Breast epithelium (tissue), 4 donors: ENCODE measurements at regions of chr10 and their contacts with region 1.

Region 1: DNA sequence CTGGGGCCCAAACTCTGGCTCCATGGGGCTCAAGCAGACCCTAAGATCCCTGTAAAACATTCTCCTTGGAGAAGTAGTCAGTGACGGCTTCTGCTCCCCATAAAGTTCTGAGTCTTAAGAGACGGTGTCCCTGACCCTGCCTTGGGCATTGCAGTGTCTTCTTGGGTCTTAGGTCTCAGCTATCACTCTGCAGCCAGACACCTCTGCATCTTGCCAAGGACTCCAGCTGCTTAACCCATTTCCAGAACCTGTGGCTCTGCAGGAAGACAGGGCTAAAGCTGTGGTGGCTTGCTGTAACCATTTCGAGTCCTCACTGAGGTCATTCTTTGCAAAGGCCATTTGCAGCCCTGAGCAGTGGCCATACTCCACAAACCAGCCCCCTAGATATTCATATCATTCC is 337.1 kb upstream of the ZMIZ1 start:
- DNase-seq: no peak
- H3K4me3 ChIP-seq: no peak overlapping the region
- H3K27ac ChIP-seq: no peak overlapping the region
- H3K4me1 ChIP-seq: no peaks in the 10 kb centered on the region
- H3K27me3 ChIP-seq: no peaks in the 10 kb centered on the region
- CTCF ChIP-seq: no peak
- POLR2A ChIP-seq: no peak

Region 2: DNA sequence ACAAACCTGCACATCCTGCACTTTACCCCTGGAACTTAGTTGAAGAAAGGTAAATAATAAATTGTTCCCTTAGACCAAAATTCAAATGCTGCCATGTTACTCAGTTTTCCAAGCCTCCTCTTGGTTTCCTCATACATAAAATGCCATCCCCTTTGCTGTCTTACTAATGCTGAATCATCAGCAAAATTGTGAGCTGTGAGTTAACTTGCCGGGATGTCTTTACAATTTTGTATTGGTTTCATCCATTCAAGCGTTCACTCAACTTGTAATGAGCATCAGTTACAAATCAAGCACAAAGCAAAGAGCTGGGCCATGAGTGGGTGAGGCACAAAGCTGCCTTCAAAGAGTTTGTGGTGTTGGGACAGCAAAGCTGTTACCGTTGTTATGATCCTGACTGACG is 58.8 kb before region 1 on chr10:
- intact Hi-C with region 1: no loop called
- DNase-seq: no peak
- H3K4me3 ChIP-seq: no peak overlapping the region
- H3K27ac ChIP-seq: no peak overlapping the region
- H3K4me1 ChIP-seq: no peaks in the 10 kb centered on the region
- H3K27me3 ChIP-seq: no peaks in the 10 kb centered on the region
- CTCF ChIP-seq: no peak
- POLR2A ChIP-seq: no peak

Region 3: DNA sequence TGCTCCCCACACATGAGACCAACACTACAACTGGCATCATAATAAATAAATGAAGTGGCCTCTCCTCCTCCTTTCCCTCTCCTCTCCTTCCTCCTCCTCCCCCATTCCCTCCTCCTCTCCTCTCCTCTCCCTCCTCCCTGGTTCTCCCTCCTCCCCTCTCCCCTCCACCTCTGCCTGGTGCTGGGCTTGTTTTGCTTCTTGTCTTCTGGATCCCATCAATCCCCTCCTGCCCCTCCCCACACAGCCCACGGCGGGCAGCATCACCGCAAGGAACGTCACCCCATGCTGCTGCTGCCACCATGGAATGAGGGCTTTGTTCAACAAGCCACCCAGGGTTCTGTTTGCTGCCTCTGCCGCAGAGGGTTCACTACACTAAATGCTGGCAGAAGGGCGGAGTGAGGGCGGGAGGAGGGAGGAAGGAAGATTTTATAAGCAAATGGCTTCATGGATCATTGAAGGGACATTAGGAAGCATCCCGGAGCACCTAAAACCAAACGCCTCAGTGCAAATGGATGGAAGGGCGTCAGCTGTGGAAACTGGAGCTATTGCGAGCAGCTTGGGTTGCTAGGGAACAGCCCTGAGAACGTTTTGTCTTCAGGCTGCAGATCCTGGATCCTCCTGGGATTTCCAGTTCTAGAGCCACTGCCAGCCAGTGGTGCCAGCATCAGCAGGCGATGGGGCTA is 42.6 kb before region 1 on chr10:
- intact Hi-C with region 1: no loop called
- DNase-seq: no peak
- H3K4me3 ChIP-seq: no peak overlapping the region
- H3K27ac ChIP-seq: no peak overlapping the region
- H3K4me1 ChIP-seq: peaks cover 0 to 3% of the 10 kb centered on the region in 2 donors
- H3K27me3 ChIP-seq: no peaks in the 10 kb centered on the region
- CTCF ChIP-seq: no peak
- POLR2A ChIP-seq: no peak

Region 4: DNA sequence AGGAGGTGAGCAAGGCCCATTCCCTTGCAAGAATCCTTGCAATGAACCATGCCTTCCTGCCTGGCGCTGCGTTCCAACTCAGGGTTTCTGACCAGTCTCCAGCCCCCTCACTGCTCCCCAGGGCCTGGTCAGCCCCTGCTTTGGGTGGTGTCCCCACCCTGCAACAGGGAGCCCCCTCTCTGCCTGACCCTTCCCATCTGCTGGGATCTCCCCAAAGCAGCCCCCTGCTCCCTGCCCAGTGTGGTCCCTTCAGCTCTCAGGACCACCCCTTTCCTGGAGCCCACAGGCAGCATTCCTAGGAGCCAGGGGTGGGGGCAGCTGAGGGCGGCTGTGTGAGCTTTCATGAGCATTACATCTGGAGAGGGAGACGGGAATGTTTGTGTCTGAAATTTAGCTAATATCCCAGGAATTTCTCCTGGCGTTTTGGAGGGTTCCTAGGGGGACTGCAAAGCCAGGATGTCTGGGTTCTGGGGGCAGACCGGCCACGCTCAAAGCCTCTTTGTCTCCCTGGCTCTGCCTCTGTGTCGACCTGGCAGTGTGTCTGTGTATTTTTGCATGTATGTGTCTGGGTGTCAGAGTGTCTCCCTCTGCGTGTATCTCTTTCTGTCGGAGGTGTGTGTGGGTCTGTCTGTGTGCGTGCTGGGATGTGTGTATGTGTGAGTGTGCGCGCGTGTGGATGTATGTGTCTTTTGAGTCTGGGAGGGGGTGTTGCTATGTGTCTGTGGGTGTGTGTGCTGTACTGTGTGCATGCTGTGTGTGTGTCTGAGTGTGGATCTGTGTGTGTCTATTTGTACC is 36.6 kb after region 1 on chr10:
- intact Hi-C with region 1: loop called (anchors 1 kb)
- DNase-seq: peak in 1 of 2 donors; percentile 19
- H3K4me3 ChIP-seq: no peak overlapping the region
- H3K27ac ChIP-seq: no peak overlapping the region
- H3K4me1 ChIP-seq: peaks cover 0 to 5% of the 10 kb centered on the region in 2 donors
- H3K27me3 ChIP-seq: no peaks in the 10 kb centered on the region
- CTCF ChIP-seq: no peak
- POLR2A ChIP-seq: no peak